Naive thymus-derived CD4-positive, alpha-beta T cell (primary cell): ENCODE measurements at regions of chr15 and their contacts with region 1.

Region 1: DNA sequence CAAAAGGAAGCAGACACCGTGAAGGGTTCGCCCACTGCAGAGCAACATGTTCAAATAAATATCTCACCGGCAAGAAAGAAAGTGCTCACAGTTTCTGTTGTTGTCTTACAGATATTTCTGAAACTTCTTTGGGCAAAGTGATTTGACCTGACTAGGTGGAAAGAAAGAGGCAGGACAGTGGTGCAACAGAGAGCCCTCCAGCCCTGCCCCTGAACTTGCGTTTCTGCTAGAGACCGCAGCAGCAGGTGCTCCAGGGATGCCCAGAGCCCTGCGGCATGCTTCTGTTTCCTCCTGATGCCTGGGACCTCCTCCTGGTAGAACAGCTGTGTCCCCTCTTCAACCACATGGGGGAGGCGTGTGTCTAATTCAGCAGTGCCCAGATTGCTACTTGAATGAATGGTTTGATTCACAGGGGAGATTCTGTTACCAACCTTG is 123.4 kb downstream of the ATP10A start:
- DNase-seq: peak in 7 of 9 donors; percentile 42 to 60 (median 56)
- ATAC-seq: peak; percentile 82
- H3K4me3 ChIP-seq: no peak overlapping the region
- H3K4me3 Mint-ChIP-seq: peak overlapping the region in 1 of 10 donors; percentile 2
- H3K27ac ChIP-seq: no peak overlapping the region
- H3K27ac Mint-ChIP-seq: peak overlapping the region in 8 of 9 donors; percentile 1 to 69 (median 18)
- H3K4me1 ChIP-seq: no peaks in the 10 kb centered on the region
- H3K4me1 Mint-ChIP-seq: peaks cover 19 to 52% (median 42%) of the 10 kb centered on the region in 7 donors
- H3K27me3 ChIP-seq: no peaks in the 10 kb centered on the region
- H3K27me3 Mint-ChIP-seq: no peaks in the 10 kb centered on the region

Region 2: GRCh38 chr15:24879492-24879891 is 860.2 kb before region 1 on chr15:
- CTCF ChIA-PET with region 1: no interaction called
- POLR2A ChIA-PET with region 1: no interaction called
- intact Hi-C with region 1: no loop called
- DNase-seq: no peak
- ATAC-seq: no peak
- H3K4me3 ChIP-seq: no peak overlapping the region
- H3K4me3 Mint-ChIP-seq: no peak overlapping the region
- H3K27ac ChIP-seq: no peak overlapping the region
- H3K27ac Mint-ChIP-seq: no peak overlapping the region
- H3K4me1 ChIP-seq: no peaks in the 10 kb centered on the region
- H3K4me1 Mint-ChIP-seq: peaks cover 0 to 3% (median 0%) of the 10 kb centered on the region in 7 donors
- H3K27me3 ChIP-seq: no peaks in the 10 kb centered on the region
- H3K27me3 Mint-ChIP-seq: peaks cover 0 to 12% (median 0%) of the 10 kb centered on the region in 5 donors

Region 3: GRCh38 chr15:25883463-25884259 is 144.0 kb after region 1 on chr15:
- CTCF ChIA-PET with region 1: no interaction called
- POLR2A ChIA-PET with region 1: no interaction called
- intact Hi-C with region 1: loop called in 1 of 2 experiments (anchors 1 kb)
- DNase-seq: no peak
- ATAC-seq: no peak
- H3K4me3 ChIP-seq: no peak overlapping the region
- H3K4me3 Mint-ChIP-seq: no peak overlapping the region
- H3K27ac ChIP-seq: no peak overlapping the region
- H3K27ac Mint-ChIP-seq: no peak overlapping the region
- H3K4me1 ChIP-seq: no peaks in the 10 kb centered on the region
- H3K4me1 Mint-ChIP-seq: peaks cover 0 to 4% (median 0%) of the 10 kb centered on the region in 7 donors
- H3K27me3 ChIP-seq: no peaks in the 10 kb centered on the region
- H3K27me3 Mint-ChIP-seq: peaks cover 0 to 19% (median 0%) of the 10 kb centered on the region in 5 donors

Region 4: DNA sequence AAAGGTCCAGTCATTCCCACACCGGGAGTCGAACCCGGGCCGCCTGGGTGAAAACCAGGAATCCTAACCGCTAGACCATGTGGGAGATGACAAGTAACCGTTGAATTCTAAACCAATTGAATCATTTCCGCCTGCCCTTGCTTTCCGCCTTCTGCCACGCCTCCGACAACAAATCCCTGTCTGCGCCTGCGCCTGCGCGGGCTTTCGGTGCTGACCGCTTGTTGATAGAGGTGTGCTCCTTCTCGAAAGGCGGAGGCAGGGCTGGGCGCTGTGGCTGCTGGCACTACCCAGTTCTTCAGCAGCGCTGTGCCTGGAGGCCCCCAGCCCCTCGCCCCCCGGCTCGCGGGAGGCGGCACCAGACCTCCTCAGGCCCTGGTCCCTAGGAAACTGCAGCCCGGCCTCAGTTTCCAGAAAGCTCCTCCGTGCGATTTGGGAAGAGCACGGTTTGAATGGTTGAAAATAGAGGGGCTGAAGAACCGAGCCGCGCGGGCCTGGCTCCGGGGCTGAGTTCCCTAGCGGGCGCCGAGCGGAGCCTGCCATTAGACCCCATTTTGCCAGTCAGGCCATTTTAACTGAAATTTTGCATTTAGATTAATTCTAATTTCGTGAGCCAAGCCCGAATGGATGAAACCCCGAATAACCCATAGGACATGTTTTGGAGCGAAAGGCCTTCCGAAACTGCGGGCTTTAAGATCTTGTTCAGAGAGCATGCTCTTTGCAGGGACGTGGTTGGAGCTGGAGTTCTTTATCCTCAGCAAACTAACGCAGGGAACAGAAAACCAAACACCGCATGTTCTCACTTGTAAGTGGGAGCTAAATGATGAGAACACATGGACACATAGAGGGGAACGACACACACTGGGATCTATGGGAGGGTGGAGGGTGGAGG is 342.8 kb after region 1 on chr15:
- CTCF ChIA-PET with region 1: no interaction called
- POLR2A ChIA-PET with region 1: no interaction called
- intact Hi-C with region 1: loop called in 1 of 2 experiments (anchors 10 kb)
- DNase-seq: peak; percentile 90 to 97 (median 96)
- ATAC-seq: peak; percentile 97
- H3K4me3 ChIP-seq: peak overlapping the region; percentile 83
- H3K4me3 Mint-ChIP-seq: peak overlapping the region; percentile 84 to 97 (median 92)
- H3K27ac ChIP-seq: peak overlapping the region; percentile 78
- H3K27ac Mint-ChIP-seq: peak overlapping the region; percentile 86 to 100 (median 98)
- H3K4me1 ChIP-seq: peaks cover 0 to 3% of the 10 kb centered on the region in 2 donors
- H3K4me1 Mint-ChIP-seq: peaks cover 13 to 58% (median 43%) of the 10 kb centered on the region in 7 donors
- H3K27me3 ChIP-seq: no peaks in the 10 kb centered on the region
- H3K27me3 Mint-ChIP-seq: peaks cover 0 to 18% (median 0%) of the 10 kb centered on the region in 5 donors

Region 5: GRCh38 chr15:26260517-26261133 is 520.9 kb after region 1 on chr15:
- CTCF ChIA-PET with region 1: no interaction called
- POLR2A ChIA-PET with region 1: no interaction called
- intact Hi-C with region 1: loop called in 1 of 2 experiments (anchors 10 kb)
- DNase-seq: peak in 6 of 9 donors; percentile 3 to 25 (median 14)
- ATAC-seq: peak; percentile 40
- H3K4me3 ChIP-seq: no peak overlapping the region
- H3K4me3 Mint-ChIP-seq: no peak overlapping the region
- H3K27ac ChIP-seq: no peak overlapping the region
- H3K27ac Mint-ChIP-seq: no peak overlapping the region
- H3K4me1 ChIP-seq: no peaks in the 10 kb centered on the region
- H3K4me1 Mint-ChIP-seq: no peaks in the 10 kb centered on the region
- H3K27me3 ChIP-seq: no peaks in the 10 kb centered on the region
- H3K27me3 Mint-ChIP-seq: peaks cover 0 to 43% (median 17%) of the 10 kb centered on the region in 5 donors